ENCODE measurements at regions of chr20 and their contacts with region 1.

Region 1: GRCh38 chr20:54680872-54681619 is 205.7 kb downstream of the DOK5 start:
- DNase-seq: peak in 4 of 6 donors; percentile 20 to 57 (median 36)
- ATAC-seq: peak; percentile 66 to 79 (median 72)
- H3K4me3 ChIP-seq: no peak overlapping the region
- H3K27ac ChIP-seq: no peak overlapping the region
- H3K4me1 ChIP-seq: no peaks in the 10 kb centered on the region
- H3K27me3 ChIP-seq: no peaks in the 10 kb centered on the region
- CTCF ChIP-seq: peak; percentile 25 to 64 (median 54)

Region 2: GRCh38 chr20:54726768-54727422 is 45.8 kb after region 1 on chr20:
- intact Hi-C with region 1: loop called in 1 of 3 experiments (anchors 5 kb)
- DNase-seq: peak in 4 of 6 donors; percentile 23 to 61 (median 38)
- ATAC-seq: peak; percentile 86 to 96 (median 94)
- H3K4me3 ChIP-seq: no peak overlapping the region
- H3K27ac ChIP-seq: no peak overlapping the region
- H3K4me1 ChIP-seq: no peaks in the 10 kb centered on the region
- H3K27me3 ChIP-seq: no peaks in the 10 kb centered on the region
- CTCF ChIP-seq: peak in 3 of 4 donors; percentile 21 to 27 (median 26)

Region 3: GRCh38 chr20:54834255-54834654 is 153.2 kb after region 1 on chr20:
- intact Hi-C with region 1: no loop called
- DNase-seq: no peak
- ATAC-seq: no peak
- H3K4me3 ChIP-seq: no peak overlapping the region
- H3K27ac ChIP-seq: no peak overlapping the region
- H3K4me1 ChIP-seq: no peaks in the 10 kb centered on the region
- H3K27me3 ChIP-seq: peaks cover 0 to under 1% (median 0%) of the 10 kb centered on the region in 4 donors
- CTCF ChIP-seq: no peak